Heart left ventricle (tissue), 16 donors: ENCODE measurements at regions of chr20 and their contacts with region 1.

Region 1: GRCh38 chr20:19327401-19327800 is 115.0 kb downstream of the SLC24A3 start:
- DNase-seq: no peak
- ATAC-seq: no peak
- H3K4me3 ChIP-seq: no peak overlapping the region
- H3K27ac ChIP-seq: no peak overlapping the region
- H3K4me1 ChIP-seq: no peaks in the 10 kb centered on the region
- H3K27me3 ChIP-seq: no peaks in the 10 kb centered on the region
- CTCF ChIP-seq: no peak
- POLR2A ChIP-seq: no peak

Region 2: GRCh38 chr20:19382386-19383340 is 55.3 kb after region 1 on chr20:
- intact Hi-C with region 1: loop called in 1 of 10 experiments (anchors 10 kb)
- DNase-seq: no peak
- ATAC-seq: no peak
- H3K4me3 ChIP-seq: no peak overlapping the region
- H3K27ac ChIP-seq: no peak overlapping the region
- H3K4me1 ChIP-seq: no peaks in the 10 kb centered on the region
- H3K27me3 ChIP-seq: no peaks in the 10 kb centered on the region
- CTCF ChIP-seq: no peak
- POLR2A ChIP-seq: no peak